ENCODE measurements at regions of chr14 and their contacts with region 1.

Region 1: GRCh38 chr14:44912041-44912869 is 49.5 kb downstream of the KLHL28 start:
- DNase-seq: no peak
- H3K4me3 ChIP-seq: peak overlapping the region; percentile 49 to 66
- H3K27ac ChIP-seq: no peak overlapping the region
- H3K4me1 ChIP-seq: peaks cover 10% of the 10 kb centered on the region
- H3K27me3 ChIP-seq: no peaks in the 10 kb centered on the region
- CTCF ChIP-seq: no peak
- POLR2A ChIP-seq: no peak

Region 2: GRCh38 chr14:44741431-44741830 is 170.8 kb before region 1 on chr14:
- intact Hi-C with region 1: no loop called
- DNase-seq: no peak
- H3K4me3 ChIP-seq: no peak overlapping the region
- H3K27ac ChIP-seq: no peak overlapping the region
- H3K4me1 ChIP-seq: no peaks in the 10 kb centered on the region
- H3K27me3 ChIP-seq: no peaks in the 10 kb centered on the region
- CTCF ChIP-seq: no peak
- POLR2A ChIP-seq: no peak

Region 3: DNA sequence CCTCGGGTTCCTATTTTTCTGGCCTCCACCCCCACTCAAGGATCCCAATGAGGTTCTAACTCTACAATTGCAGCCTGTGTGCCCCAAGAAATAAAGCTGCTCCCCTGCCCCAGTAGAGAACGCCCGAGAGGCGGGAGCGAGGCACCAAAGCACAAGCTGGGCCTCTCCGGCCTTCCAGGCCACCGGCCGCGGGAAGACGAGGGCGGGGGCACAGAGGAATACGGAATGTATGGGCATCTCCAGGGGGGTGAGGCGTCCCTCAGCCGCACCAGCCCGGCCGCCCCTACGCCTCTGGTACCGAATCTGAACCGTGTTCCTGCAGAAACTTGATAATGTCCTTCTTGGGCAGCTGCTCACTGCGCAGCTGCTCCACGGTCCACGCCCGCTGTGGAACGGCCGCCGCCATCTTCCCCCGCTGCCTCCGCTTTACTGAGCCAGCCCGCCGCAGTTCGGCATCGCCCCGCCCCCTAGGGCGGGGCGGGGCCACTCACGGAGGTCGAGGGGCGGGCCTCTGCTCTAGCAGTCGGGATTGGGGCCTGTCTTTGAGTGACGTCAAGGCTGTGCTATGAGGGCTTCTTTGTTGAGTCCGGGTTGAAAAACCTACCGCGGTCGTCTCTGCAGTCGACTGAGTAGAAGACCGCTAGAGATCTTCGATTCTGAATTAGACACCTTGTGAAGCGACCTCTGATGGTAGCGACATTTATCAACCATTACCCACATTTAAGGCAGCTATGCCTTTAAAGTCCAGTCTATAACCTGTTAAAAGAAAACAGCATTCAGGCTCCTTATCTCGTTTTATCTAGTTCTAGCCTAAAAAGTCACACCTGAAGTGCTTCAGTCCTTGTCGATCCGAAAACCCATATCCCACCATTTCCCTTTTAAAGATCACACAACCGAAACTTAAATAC is 222.1 kb after region 1 on chr14 and contains the start of gene FKBP3:
- intact Hi-C with region 1: loop called (anchors 10 kb)
- DNase-seq: peak; percentile 97 to 98
- H3K4me3 ChIP-seq: peak within 1 kb of the TSS; percentile 54 to 57
- H3K27ac ChIP-seq: peak within 1 kb of the TSS; percentile 77
- H3K4me1 ChIP-seq: peaks cover 46% of the 10 kb centered on the region
- H3K27me3 ChIP-seq: no peaks in the 10 kb centered on the region
- CTCF ChIP-seq: no peak
- POLR2A ChIP-seq: peak in 1 of 2 donors; percentile 64
- total RNA-seq, gene FKBP3: 37.1 TPM

Measured in vagina (tissue), 2 donors.